ENCODE measurements at regions of chr16 and their contacts with region 1.

Region 1: GRCh38 chr16:50152807-50153452 is at the start of gene TENT4B:
- DNase-seq: peak; percentile 92
- ATAC-seq: peak; percentile 71
- H3K4me3 Mint-ChIP-seq: peak within 1 kb of the TSS; percentile 79
- H3K27ac Mint-ChIP-seq: peak within 1 kb of the TSS; percentile 98
- H3K4me1 Mint-ChIP-seq: peaks cover 39% of the 10 kb centered on the region
- H3K27me3 Mint-ChIP-seq: no peaks in the 10 kb centered on the region
- total RNA-seq, gene TENT4B: 19.3 to 22.4 TPM

Region 2: DNA sequence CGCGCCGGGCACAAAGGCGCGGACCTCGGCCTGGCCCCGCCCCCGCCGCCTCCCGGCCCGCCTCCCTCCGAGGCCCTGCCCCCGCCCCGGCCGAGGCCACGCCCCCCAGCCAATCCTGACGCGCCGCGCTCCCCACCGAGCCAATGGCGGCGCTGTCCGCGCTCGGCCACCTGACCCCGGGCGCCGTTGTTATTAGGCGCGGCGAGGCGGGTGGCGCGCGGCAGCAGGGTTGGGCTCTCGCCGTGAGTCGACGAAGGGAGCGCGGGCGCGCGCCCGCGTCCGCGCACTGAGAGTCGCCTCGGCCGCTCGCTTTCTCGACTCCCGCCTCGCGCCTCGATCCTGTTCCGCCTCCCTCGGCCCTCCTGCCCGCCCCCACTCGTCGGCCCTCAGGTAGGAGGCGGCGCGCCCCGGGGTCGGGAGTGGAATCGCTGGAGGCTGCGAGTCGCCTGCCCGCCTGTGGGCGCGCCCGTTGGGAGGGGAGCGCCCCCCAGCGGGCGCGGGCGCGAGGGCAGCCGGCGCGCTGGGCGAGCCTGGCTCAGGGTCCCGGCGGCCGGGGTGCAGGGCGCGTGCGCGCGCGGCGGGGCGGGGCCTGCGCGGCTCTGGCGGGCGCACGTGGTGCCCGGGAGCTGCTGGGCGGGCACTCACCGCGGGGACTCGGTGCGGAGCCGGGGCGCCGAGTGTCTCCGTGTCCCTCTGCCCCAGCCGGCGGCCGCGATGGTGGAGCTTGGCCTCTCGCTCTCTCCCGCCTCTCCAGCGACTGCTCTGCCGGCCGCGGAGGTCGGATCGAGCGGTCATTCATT is 870.9 kb before region 1 on chr16:
- CTCF ChIA-PET with region 1: no interaction called
- POLR2A ChIA-PET with region 1: no interaction called
- intact Hi-C with region 1: loop called in 1 of 2 experiments (anchors 5 kb)
- DNase-seq: peak; percentile 92
- ATAC-seq: peak; percentile 94
- H3K4me3 Mint-ChIP-seq: peak overlapping the region; percentile 56
- H3K27ac Mint-ChIP-seq: no peak overlapping the region
- H3K4me1 Mint-ChIP-seq: peaks cover 11% of the 10 kb centered on the region
- H3K27me3 Mint-ChIP-seq: peaks cover 61% of the 10 kb centered on the region

Region 3: GRCh38 chr16:49643429-49644144 is 509.3 kb before region 1 on chr16:
- CTCF ChIA-PET with region 1: no interaction called
- POLR2A ChIA-PET with region 1: no interaction called
- intact Hi-C with region 1: no loop called
- DNase-seq: no peak
- ATAC-seq: no peak
- H3K4me3 Mint-ChIP-seq: no peak overlapping the region
- H3K27ac Mint-ChIP-seq: no peak overlapping the region
- H3K4me1 Mint-ChIP-seq: no peaks in the 10 kb centered on the region
- H3K27me3 Mint-ChIP-seq: peaks cover 2% of the 10 kb centered on the region

Region 4: GRCh38 chr16:50121721-50122445 is 31.0 kb before region 1 on chr16:
- CTCF ChIA-PET with region 1: no interaction called
- POLR2A ChIA-PET with region 1: interaction called, 3 read pairs
- intact Hi-C with region 1: loop called (anchors 1 to 2 kb)
- DNase-seq: peak; percentile 82
- ATAC-seq: peak; percentile 88
- H3K4me3 Mint-ChIP-seq: no peak overlapping the region
- H3K27ac Mint-ChIP-seq: peak overlapping the region; percentile 40
- H3K4me1 Mint-ChIP-seq: peaks cover 13% of the 10 kb centered on the region
- H3K27me3 Mint-ChIP-seq: no peaks in the 10 kb centered on the region

Region 5: DNA sequence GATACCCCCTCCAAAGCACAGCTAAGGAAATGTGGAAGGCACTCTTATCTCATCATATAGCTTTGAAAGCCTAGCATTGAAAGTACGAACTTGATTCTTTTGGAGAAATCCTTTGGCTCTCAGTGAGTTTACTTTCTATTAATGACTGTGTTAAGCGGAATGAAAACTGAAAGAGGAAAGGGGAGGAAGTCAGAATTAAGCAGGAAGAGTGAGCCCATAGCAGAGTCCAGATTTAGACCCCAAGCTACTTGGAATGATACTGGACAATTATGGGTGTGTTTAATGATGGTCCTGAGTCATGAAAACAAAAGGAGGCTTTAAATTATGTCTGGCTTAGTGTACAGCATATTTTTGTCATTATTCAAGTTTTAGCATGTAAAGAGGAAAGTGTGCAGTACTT is 42.3 kb after region 1 on chr16:
- CTCF ChIA-PET with region 1: interaction called, 4 read pairs
- POLR2A ChIA-PET with region 1: no interaction called
- intact Hi-C with region 1: loop called in 1 of 2 experiments (anchors 5 kb)
- DNase-seq: no peak
- ATAC-seq: no peak
- H3K4me3 Mint-ChIP-seq: no peak overlapping the region
- H3K27ac Mint-ChIP-seq: peak overlapping the region; percentile 8
- H3K4me1 Mint-ChIP-seq: peaks cover 53% of the 10 kb centered on the region
- H3K27me3 Mint-ChIP-seq: no peaks in the 10 kb centered on the region

Region 6: DNA sequence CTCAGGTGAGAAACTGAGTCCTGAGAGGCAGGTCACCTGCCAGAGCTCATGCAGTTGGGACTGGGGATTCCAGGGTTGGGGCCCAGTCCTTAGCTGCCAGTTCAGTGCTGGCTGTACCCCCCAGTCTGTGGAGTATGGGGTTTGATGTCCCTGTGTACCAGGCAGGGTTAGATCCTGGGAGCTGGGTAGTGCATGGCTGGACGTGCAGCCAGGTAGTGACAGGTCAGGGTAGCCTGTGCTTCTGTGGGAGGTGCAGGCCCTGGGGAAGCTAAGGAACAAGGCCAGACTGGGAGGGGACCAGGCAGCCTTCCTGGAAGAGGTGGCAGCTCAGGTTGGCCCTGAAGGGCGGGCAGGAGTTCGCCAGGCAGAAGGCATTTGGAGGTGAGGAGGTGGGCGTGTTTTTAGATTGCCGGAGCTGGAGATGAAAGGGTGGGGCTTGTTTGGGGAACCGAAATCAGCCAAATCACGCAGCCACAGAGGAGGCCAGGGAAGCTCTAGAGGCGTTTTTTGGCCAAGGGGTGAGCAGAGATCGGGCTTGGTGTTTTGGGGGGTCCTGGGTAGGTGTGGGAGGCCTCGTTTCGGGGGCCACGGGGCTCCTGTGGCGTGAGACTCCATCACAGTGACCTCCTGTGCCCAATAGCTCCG is 120.9 kb after region 1 on chr16:
- CTCF ChIA-PET with region 1: no interaction called
- POLR2A ChIA-PET with region 1: no interaction called
- intact Hi-C with region 1: loop called in 1 of 2 experiments (anchors 1 kb)
- DNase-seq: peak; percentile 73
- ATAC-seq: peak; percentile 37
- H3K4me3 Mint-ChIP-seq: peak overlapping the region; percentile 97
- H3K27ac Mint-ChIP-seq: peak overlapping the region; percentile 100
- H3K4me1 Mint-ChIP-seq: peaks cover 92% of the 10 kb centered on the region
- H3K27me3 Mint-ChIP-seq: no peaks in the 10 kb centered on the region

Region 7: DNA sequence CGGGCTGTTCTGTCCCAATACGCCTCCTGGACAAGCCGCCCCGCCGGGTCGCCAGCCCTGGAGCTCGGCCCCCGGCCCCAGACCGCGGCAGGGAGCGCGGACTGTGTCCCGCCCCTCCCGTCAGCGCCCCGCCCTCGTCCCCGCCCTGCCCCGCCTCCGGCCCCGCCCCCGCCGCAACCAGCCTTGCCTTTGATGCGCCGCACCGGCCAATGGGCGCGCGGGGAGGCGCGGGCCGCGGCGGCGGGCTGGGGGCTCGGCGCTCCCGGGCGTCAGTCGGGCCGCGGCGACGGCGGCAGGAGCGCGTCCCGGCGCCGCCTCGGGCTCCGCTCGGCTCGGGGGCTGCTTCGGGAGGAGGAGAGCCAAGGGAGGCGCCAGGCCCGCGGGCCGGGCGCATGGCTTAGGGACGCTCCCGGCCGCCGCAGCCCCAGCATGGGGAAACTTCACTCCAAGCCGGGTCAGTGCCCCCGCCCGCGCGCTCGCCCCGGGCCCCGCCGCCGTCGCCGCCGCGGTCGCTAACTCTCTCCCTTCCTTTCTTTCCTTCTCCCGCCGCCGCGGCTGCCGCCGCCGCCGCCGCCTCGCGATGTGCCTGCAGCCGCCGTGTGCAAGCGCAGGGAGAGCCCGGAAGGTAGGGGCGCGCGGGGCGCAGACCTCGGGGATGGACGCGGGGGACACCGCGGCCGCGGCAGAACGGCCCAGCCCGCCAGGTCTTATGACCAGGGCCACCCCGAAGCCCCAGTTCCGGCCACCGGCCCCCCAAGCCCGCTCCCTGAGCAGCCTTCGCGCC is 395.4 kb after region 1 on chr16 and contains the start of gene NKD1:
- CTCF ChIA-PET with region 1: no interaction called
- POLR2A ChIA-PET with region 1: no interaction called
- intact Hi-C with region 1: loop called in 1 of 2 experiments (anchors 1 kb)
- DNase-seq: peak; percentile 87
- ATAC-seq: peak; percentile 84
- H3K4me3 Mint-ChIP-seq: peak within 1 kb of the TSS; percentile 81
- H3K27ac Mint-ChIP-seq: no peak within 1 kb of the TSS
- H3K4me1 Mint-ChIP-seq: peaks cover 28% of the 10 kb centered on the region
- H3K27me3 Mint-ChIP-seq: no peaks in the 10 kb centered on the region
- total RNA-seq, gene NKD1: 1.8 to 3.1 TPM

Region 8: GRCh38 chr16:50821586-50821985 is 668.7 kb after region 1 on chr16:
- CTCF ChIA-PET with region 1: no interaction called
- POLR2A ChIA-PET with region 1: no interaction called
- intact Hi-C with region 1: no loop called
- DNase-seq: no peak
- ATAC-seq: no peak
- H3K4me3 Mint-ChIP-seq: no peak overlapping the region
- H3K27ac Mint-ChIP-seq: no peak overlapping the region
- H3K4me1 Mint-ChIP-seq: no peaks in the 10 kb centered on the region
- H3K27me3 Mint-ChIP-seq: peaks cover 12% of the 10 kb centered on the region

Measured in activated CD4-positive, alpha-beta T cell treated with anti-CD3 and anti-CD28 coated beads for 36 hours (primary cell).